ENCODE measurements at regions of chr6 and their contacts with region 1.

Region 1: DNA sequence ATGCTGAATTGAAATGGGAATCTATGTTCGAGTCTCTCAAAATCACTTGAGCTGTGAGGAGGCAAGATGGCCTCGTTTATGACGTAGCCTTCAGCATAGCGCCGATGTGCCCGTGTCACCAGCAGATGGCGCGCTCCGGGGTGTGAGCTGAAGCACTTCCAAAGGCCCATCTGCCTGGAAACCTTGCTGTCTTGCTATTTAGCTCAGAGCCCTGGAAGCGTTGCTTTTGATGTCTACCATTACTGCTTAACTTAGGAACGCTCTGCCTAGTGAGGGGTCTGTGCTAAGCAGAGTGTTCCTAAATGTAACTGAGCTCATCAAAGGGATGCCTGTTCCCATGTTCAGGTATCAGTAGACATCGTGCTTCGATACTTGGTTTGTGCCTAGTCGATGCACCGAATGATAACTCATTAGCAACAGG is 67.7 kb downstream of the SYCP2L start:
- DNase-seq: peak; percentile 68 to 83 (median 79)
- ATAC-seq: peak; percentile 93
- H3K4me3 ChIP-seq: no peak overlapping the region
- H3K4me1 ChIP-seq: no peaks in the 10 kb centered on the region
- CTCF ChIP-seq: peak; percentile 66

Region 2: DNA sequence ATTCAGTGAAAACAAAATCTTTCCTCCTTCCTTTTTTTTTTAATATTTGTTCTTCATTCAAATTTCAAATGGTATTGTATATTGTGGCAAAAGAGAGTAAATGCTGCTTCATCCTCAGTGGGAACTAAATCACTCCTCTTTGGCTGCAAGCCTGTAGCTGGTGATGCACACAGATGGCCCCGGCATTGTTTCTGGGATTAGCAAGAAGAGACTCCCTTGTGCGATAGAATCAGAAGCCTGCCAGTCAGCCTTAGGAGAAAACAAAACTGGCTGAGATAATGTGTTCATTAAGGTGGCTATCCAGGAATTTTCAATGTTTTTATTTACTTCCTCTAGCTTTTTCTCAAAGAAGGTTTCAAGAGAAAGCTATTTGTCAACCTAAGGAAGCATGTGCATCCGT is 110.2 kb after region 1 on chr6:
- intact Hi-C with region 1: loop called in 1 of 2 experiments (anchors 5 kb)
- DNase-seq: no peak
- ATAC-seq: no peak
- H3K4me3 ChIP-seq: no peak overlapping the region
- H3K4me1 ChIP-seq: no peaks in the 10 kb centered on the region
- CTCF ChIP-seq: no peak

Region 3: DNA sequence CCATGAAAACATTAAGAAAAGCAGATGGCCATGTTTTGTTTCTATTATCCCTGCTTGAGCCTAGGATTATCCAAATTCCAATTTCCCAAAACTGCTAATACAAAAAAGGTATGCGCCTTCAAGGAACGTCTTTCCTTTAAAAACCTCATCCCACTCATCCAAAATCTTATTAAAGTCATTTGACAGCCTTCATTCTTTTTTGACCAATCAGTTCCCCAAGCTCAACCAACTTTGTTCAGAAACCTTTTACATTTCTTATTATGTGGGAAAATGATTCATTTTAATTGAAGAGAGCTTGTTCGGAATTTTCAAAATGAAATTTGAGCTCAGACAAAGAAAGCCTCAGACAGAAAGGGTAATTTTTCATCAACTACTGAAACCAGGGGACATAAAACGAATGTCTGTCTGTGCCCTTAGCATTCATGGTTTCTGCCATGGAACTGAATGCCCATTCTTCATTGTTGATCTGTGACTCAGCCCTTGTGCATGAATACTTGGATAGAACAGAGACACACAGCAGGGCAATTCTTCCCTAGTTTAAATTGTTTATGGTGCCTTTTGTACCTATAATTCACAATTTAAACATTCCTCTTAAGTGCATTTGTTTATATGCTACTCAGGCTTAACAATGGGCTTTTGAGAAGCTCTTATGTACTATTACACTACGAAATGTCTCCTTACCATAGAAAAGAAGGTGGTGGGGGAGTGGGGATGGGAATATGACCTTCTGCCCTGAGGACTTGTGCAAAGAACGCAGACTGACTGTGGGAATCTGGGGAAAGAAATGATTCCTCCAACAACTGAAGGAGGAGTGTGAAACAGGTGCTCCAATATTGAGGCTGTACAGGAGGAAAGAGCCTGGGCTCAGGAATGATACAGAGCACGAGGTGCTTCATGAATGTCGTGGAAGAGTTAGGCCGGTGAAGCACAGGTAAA is 206.7 kb after region 1 on chr6:
- intact Hi-C with region 1: no loop called
- DNase-seq: no peak
- ATAC-seq: peak; percentile 40
- H3K4me3 ChIP-seq: no peak overlapping the region
- H3K4me1 ChIP-seq: no peaks in the 10 kb centered on the region
- CTCF ChIP-seq: no peak

Region 4: GRCh38 chr6:11496152-11497060 is 541.8 kb after region 1 on chr6:
- intact Hi-C with region 1: loop called (anchors 10 kb)
- DNase-seq: peak in 1 of 3 donors; percentile 74
- ATAC-seq: peak; percentile 93
- H3K4me3 ChIP-seq: no peak overlapping the region
- H3K4me1 ChIP-seq: peaks cover 13% of the 10 kb centered on the region
- CTCF ChIP-seq: peak; percentile 75

Measured in mucosa of descending colon (tissue), 3 donors.